ENCODE measurements at regions of chr20 and their contacts with region 1.

Region 1: DNA sequence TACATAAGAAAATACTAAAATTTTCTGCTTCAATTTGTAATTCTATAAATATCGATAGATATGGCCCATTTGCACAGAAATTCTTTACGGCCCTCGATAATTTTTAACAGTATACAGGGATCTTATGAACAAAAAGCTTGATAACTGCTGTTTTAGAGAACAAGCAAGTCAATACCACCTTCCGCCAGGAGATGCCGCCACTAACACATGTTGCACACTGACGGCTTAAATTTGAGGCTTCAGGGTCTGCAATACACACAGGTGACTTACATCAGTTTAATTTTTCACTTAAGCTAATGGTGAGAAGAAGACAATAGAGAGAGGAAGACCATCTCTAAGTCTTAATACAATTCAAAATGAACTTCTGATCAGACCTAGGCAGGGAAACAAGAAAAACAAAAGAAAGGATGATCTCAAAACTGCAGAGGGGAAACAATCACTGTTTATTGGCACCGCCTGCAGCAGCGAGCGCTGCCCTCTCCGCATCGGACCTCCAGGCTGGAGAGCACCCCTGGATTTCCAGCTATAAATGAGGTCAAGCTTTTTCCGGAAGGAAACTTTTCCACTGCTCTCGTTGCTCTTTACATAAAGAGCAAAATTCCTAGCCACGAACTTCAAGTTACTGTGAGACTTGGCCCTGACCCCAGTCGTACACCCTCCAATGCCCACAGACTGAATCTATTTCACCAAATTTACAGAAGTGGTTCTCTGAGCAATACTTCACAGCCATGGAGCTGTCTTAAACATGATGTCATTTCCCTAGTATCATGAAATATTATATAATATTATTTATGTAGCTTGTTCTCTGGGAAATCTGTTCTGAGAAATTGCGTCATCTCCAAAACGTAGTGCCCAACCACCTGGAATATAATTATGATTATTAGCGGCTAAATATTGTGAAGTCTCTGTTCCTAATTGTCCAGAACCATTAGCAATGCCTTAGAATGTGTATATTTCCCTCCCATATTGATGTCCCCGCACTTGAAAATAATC is 54.1 kb downstream of the OTOR start:
- DNase-seq: peak; percentile 64 to 92 (median 76)
- H3K4me3 ChIP-seq: peak overlapping the region in 21 of 59 donors; percentile 1 to 40 (median 24)
- H3K27ac ChIP-seq: peak overlapping the region in 7 of 59 donors; percentile 3 to 46 (median 33)
- H3K27me3 ChIP-seq: peaks cover 0 to 58% (median 0%) of the 10 kb centered on the region in 45 donors
- CTCF ChIP-seq: peak; percentile 77 to 98 (median 90)

Region 2: DNA sequence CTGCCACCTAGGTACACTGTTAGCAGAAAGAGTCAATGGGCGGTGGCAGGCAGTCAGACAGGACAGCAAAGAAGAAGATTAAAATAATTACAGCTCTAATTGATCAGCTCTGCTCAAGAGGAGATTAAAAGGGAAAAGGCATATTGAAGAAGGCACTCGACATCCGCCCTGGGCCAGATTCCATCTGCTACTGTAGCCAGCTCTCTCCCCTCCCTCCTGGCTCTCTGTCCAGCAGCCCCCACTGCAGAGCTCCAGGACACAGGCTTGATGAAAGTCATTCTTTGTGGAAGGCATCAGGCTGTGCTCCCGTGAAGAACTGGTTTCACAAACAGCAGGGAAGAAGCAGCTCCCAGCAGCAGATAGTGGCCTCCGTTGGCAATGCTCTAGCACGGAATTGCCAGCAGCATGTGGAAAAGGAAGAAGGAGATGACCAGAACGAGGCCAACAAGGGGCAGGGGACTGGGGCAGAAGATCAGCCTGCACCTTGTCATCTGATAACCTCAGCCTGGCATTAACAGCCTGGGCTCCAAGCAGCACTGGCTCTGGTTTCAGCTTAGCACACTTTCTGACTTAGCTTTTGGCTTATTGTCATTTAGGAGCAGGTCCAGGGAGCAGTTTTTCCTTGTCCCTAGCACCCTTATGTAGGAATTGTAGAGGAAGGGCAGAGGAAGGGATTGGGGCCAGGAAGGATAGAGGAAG is 694.9 kb before region 1 on chr20:
- intact Hi-C with region 1: no loop called
- DNase-seq: peak in 1 of 10 donors; percentile 68
- H3K4me3 ChIP-seq: no peak overlapping the region
- H3K27ac ChIP-seq: peak overlapping the region in 1 of 59 donors; percentile 69
- H3K27me3 ChIP-seq: peaks cover 0 to 3% (median 0%) of the 10 kb centered on the region in 45 donors
- CTCF ChIP-seq: no peak

Region 3: GRCh38 chr20:16397086-16397485 is 405.1 kb before region 1 on chr20:
- intact Hi-C with region 1: no loop called
- DNase-seq: peak in 9 of 10 donors; percentile 16 to 79 (median 53)
- H3K4me3 ChIP-seq: no peak overlapping the region
- H3K27ac ChIP-seq: peak overlapping the region in 21 of 59 donors; percentile 1 to 55 (median 26)
- H3K27me3 ChIP-seq: no peaks in the 10 kb centered on the region
- CTCF ChIP-seq: no peak

Region 4: DNA sequence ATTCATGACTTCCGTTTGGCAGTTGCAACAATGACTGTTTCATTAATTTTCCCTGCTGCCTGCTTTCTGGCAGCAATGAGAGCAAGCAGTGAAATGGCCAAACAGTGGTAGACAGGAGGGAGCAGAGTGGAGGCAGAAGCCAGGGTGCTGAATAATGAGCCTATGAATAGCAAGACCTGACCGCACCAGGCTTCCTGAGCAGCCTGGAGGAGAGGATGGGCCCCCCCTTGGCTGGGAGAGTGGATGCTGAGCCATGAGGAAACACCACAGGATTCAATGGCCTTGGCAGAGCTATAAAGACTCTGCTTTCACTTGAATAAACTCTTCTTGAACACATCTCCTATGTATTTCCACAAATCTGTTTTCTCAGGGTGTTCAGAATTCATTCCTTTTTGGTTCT is 140.5 kb before region 1 on chr20:
- intact Hi-C with region 1: no loop called
- DNase-seq: peak in 7 of 10 donors; percentile 6 to 77 (median 46)
- H3K4me3 ChIP-seq: no peak overlapping the region
- H3K27ac ChIP-seq: peak overlapping the region in 4 of 59 donors; percentile 5 to 53 (median 34)
- H3K27me3 ChIP-seq: peaks cover 0 to 4% (median 0%) of the 10 kb centered on the region in 45 donors
- CTCF ChIP-seq: no peak

Region 5: DNA sequence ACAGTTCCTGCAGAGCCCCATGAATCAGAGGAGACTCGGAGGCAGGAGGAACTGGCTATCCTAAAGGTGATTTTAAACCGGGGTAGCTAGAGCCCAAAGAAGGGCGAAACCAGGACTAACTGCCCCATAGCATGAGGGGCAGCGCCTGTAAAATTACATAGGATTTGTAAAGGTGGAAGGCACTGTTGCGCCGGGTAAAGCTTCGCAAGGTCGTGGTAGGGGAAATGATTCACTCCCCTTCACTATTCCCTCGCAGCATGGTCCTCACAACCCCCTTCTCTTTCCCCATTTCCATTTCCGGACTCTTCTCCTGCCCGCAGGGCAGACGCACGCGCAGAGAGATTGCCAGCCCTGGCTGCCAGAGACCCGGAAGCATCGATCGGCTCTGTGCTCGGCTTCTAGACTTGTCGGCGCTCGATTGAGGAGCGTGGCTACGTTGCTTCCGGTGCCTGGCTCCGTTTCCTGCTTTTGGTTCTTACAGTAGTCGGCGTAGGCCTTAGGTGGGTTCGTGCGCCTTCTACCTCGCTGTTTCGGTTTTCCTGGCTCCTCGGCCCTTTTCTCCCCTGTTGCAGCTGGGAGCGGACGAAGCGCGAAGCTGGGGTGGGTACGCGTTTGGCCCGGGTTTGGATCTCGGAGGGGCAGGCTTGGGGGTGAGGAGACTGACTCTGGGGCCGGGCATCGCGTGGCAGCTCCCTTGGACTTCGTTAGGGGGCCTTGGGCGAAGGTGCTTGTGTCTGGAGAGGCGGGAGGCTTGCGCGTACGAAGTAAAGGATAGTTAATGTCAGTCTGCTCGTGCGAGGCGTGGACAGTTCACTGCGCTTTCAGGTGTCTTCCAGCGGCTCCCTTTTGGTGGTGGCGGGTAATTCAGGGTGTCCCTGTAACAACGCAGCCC is 72.4 kb before region 1 on chr20 and contains the start of gene SNRPB2:
- intact Hi-C with region 1: no loop called
- DNase-seq: peak; percentile 89 to 97 (median 94)
- H3K4me3 ChIP-seq: peak within 1 kb of the TSS; percentile 69 to 100 (median 93)
- H3K27ac ChIP-seq: peak within 1 kb of the TSS in 58 of 59 donors; percentile 12 to 93 (median 73)
- H3K27me3 ChIP-seq: peaks cover 0 to 33% (median 0%) of the 10 kb centered on the region in 45 donors
- CTCF ChIP-seq: peak in 31 of 56 donors; percentile 6 to 53 (median 22)
- total RNA-seq, gene SNRPB2: 13.8 to 51.6 (median 33.7) TPM

Region 6: DNA sequence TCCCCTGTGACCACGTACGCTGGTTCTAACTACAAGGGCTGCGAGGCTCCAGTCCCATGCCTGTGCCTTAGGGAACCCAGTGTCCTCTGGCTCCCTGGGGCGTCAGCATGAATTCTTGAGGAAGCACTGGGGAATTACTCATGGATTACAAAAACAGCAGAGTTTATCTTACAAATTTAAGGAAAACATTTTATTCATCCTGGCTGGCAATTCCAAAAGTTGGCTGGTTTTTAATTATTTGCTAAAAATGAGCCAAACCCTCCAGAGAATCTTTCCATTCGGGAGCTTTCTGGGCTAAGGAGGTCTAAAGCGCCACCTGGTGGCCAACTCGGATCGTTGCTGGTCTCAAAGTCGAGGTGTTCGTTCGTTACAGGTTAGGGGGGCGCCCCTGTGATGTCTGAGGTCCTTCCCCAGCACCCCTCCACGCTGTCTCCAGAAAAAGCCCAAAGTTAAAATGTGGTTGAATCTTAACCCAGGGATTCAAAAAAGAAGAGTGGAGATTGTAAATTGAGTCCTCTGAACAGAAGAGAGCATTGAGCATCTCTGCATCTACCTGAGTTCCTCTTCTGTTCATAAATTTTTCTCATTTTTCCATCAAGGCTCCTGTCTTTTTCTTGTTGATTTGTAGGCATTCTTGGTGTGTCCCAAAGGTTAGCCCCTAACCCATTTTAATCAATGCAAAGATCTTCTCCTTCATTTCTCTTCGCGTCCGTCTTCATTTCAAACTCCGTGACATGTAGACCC is 629.6 kb after region 1 on chr20:
- intact Hi-C with region 1: loop called (anchors 1 kb)
- DNase-seq: peak; percentile 53 to 79 (median 70)
- H3K4me3 ChIP-seq: no peak overlapping the region
- H3K27ac ChIP-seq: peak overlapping the region in 34 of 59 donors; percentile 6 to 75 (median 51)
- H3K27me3 ChIP-seq: peaks cover 0 to 5% (median 0%) of the 10 kb centered on the region in 45 donors
- CTCF ChIP-seq: peak; percentile 84 to 97 (median 94)